MCF 10A (cell line): ENCODE measurements at regions of chrX and their contacts with region 1.

Region 1: GRCh38 chrX:74343343-74344279 is 39.6 kb downstream of the ZCCHC13 start:
- DNase-seq: peak; percentile 96
- H3K4me3 Mint-ChIP-seq: no peak overlapping the region
- H3K27ac Mint-ChIP-seq: no peak overlapping the region
- H3K4me1 Mint-ChIP-seq: peaks cover 7% of the 10 kb centered on the region
- H3K27me3 Mint-ChIP-seq: peaks cover 10% of the 10 kb centered on the region
- CTCF ChIP-seq: peak; percentile 53

Region 2: GRCh38 chrX:73943693-73944562 is 399.7 kb before region 1 on chrX:
- CTCF ChIA-PET with region 1: no interaction called
- POLR2A ChIA-PET with region 1: no interaction called
- intact Hi-C with region 1: loop called (anchors 2 kb)
- DNase-seq: peak; percentile 91
- H3K4me3 Mint-ChIP-seq: peak overlapping the region; percentile 76
- H3K27ac Mint-ChIP-seq: peak overlapping the region; percentile 82
- H3K4me1 Mint-ChIP-seq: peaks cover 15% of the 10 kb centered on the region
- H3K27me3 Mint-ChIP-seq: peaks cover 11% of the 10 kb centered on the region
- CTCF ChIP-seq: no peak

Region 3: GRCh38 chrX:74015379-74016019 is 328.1 kb before region 1 on chrX:
- CTCF ChIA-PET with region 1: interaction called, 3 read pairs
- POLR2A ChIA-PET with region 1: no interaction called
- intact Hi-C with region 1: loop called (anchors 5 kb)
- DNase-seq: peak; percentile 86
- H3K4me3 Mint-ChIP-seq: no peak overlapping the region
- H3K27ac Mint-ChIP-seq: no peak overlapping the region
- H3K4me1 Mint-ChIP-seq: no peaks in the 10 kb centered on the region
- H3K27me3 Mint-ChIP-seq: no peaks in the 10 kb centered on the region
- CTCF ChIP-seq: peak; percentile 78

Region 4: GRCh38 chrX:74133156-74133796 is 210.3 kb before region 1 on chrX:
- CTCF ChIA-PET with region 1: interaction called, 7 read pairs
- POLR2A ChIA-PET with region 1: no interaction called
- intact Hi-C with region 1: loop called (anchors 2 kb)
- DNase-seq: peak; percentile 73
- H3K4me3 Mint-ChIP-seq: no peak overlapping the region
- H3K27ac Mint-ChIP-seq: no peak overlapping the region
- H3K4me1 Mint-ChIP-seq: peaks cover 5% of the 10 kb centered on the region
- H3K27me3 Mint-ChIP-seq: peaks cover 52% of the 10 kb centered on the region
- CTCF ChIP-seq: peak; percentile 68

Region 5: GRCh38 chrX:74280759-74281158 is 62.9 kb before region 1 on chrX:
- CTCF ChIA-PET with region 1: interaction called, 12 read pairs
- POLR2A ChIA-PET with region 1: interaction called, 4 read pairs
- intact Hi-C with region 1: no loop called
- DNase-seq: no peak
- H3K4me3 Mint-ChIP-seq: no peak overlapping the region
- H3K27ac Mint-ChIP-seq: no peak overlapping the region
- H3K4me1 Mint-ChIP-seq: no peaks in the 10 kb centered on the region
- H3K27me3 Mint-ChIP-seq: peaks cover 50% of the 10 kb centered on the region
- CTCF ChIP-seq: no peak

Region 6: DNA sequence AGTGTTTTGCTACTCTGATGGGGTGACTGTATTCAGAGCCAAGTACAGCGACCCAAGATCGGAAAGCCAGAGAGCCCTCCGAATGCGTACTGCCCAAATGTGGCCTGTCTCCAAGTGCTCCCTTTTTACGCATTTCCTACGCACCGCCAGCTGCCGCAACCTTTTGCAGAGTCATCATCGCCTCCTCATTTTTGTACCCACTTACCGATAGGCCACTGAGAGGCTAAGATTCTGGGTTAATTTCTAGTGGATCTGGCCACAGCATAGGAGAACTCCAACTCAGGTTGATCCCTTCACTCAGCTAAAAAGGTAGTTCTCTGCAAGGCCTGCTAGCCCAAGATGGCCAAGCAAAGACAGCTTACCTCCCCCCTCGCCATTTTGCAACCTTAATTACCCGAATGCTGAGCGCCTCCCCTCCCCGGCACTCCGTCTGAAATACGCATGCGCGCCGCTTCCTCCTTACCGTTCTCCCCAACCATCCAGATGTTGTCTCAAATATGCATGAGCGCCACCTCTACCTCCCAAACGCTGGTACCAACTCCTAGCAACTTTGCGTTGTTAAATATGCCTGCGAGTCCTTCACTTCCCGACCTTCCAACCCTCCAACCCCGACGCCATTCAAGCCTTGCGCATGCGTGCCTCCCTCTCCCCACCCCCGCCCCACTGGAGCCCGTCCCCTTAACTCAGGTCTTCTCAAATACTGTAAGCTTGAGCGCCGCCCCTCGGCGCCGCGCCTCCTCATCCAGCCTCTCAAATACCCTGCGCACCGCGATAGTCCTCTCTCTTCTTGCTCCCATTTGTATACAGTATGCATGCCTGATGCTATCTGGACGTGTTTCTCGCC is 51.4 kb before region 1 on chrX:
- CTCF ChIA-PET with region 1: interaction called, 4 read pairs
- POLR2A ChIA-PET with region 1: interaction called, 8 read pairs
- intact Hi-C with region 1: loop called (anchors 1 kb)
- DNase-seq: peak; percentile 87
- H3K4me3 Mint-ChIP-seq: peak overlapping the region; percentile 79
- H3K27ac Mint-ChIP-seq: peak overlapping the region; percentile 63
- H3K4me1 Mint-ChIP-seq: no peaks in the 10 kb centered on the region
- H3K27me3 Mint-ChIP-seq: no peaks in the 10 kb centered on the region
- CTCF ChIP-seq: no peak